ENCODE measurements at regions of chr3 and their contacts with region 1.

Region 1: DNA sequence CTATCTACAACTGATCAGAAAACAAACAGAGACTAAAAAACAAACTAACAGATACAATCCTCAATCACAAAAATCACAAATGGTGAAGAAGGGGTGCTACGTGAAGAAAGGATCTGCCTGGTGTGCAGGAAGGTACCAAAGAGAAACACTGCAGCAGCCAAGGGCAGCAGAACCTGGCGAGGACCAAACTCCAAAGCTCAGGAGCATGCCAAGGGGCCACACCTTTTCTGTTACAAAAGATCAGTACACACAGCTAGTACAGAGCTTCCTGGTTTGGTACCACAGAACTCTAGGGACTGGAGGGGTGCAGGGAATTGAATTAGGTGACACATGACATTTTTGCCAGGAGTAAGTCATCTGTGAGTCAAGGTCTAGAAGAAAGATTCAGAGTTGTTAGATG is 107.4 kb upstream of the GRM7 start:
- DNase-seq: no peak
- ATAC-seq: no peak
- H3K4me3 Mint-ChIP-seq: no peak overlapping the region
- H3K27ac Mint-ChIP-seq: no peak overlapping the region
- H3K4me1 Mint-ChIP-seq: no peaks in the 10 kb centered on the region
- H3K27me3 Mint-ChIP-seq: no peaks in the 10 kb centered on the region
- CTCF ChIP-seq: no peak

Region 2: GRCh38 chr3:6709158-6709557 is 44.4 kb before region 1 on chr3:
- CTCF ChIA-PET with region 1: no interaction called
- POLR2A ChIA-PET with region 1: no interaction called
- intact Hi-C with region 1: loop called (anchors 1 kb)
- DNase-seq: no peak
- ATAC-seq: no peak
- H3K4me3 Mint-ChIP-seq: no peak overlapping the region
- H3K27ac Mint-ChIP-seq: no peak overlapping the region
- H3K4me1 Mint-ChIP-seq: no peaks in the 10 kb centered on the region
- H3K27me3 Mint-ChIP-seq: no peaks in the 10 kb centered on the region
- CTCF ChIP-seq: no peak

Measured in activated B cell treated with CpG ODN at 0.5 μM for 24 hours (primary cell).